ENCODE measurements at regions of chr1 and their contacts with region 1.

Region 1: GRCh38 chr1:20194757-20195461 is 8.6 kb upstream of the PLA2G2C start:
- H3K4me3 Mint-ChIP-seq: no peak overlapping the region
- H3K27ac Mint-ChIP-seq: no peak overlapping the region
- H3K4me1 Mint-ChIP-seq: peaks cover 5% of the 10 kb centered on the region
- H3K27me3 Mint-ChIP-seq: peaks cover 51% of the 10 kb centered on the region

Region 2: DNA sequence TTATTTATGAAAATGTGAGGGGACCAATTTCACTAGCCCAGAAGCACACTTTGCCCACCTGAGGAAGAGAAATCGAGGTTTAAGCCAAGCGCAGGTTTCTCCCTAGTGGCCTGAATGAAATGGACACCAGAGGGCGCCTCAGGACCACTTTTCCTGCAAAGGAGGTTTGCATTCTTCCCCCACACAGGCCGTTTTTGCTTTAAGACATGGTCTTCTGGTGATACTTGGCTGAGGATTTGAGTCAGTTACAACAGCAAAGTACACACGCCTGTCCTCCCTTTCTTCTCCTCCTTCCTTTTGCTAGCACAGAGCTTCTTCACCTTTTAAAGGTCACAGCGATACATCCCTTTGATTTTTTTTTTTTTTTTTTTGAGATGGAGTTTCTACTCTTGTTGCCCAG is 276.9 kb before region 1 on chr1:
- intact Hi-C with region 1: loop called (anchors 1 kb)
- H3K4me3 Mint-ChIP-seq: no peak overlapping the region
- H3K27ac Mint-ChIP-seq: no peak overlapping the region
- H3K4me1 Mint-ChIP-seq: no peaks in the 10 kb centered on the region
- H3K27me3 Mint-ChIP-seq: peaks cover 2% of the 10 kb centered on the region

Region 3: DNA sequence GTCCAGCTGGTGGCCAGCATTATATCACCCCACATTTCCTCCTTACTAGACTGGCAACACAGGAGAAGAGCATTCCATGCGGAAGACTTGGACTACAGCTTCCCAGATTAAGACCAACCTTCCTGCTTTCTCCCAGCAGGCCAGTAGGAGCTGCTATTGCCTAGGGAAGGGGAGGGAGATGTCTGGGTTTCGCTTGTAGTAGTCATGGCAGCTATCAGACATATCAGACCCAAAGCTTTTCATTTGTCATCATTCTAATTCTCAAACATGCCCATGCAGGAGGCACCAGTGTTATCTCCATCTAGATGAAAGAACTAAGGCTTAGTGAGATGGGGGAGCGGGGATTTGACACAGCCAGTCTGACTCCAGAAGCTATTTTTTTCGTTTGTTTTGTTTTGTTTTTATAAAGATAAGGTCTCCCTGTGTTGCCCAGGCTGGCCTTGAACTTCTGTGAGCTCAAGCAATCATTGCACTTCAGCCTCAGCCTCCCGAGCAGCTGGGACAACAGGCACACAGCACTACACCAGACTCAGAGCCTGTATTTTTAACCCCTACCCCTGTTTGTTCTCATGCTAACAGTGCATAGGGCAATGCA is 220.0 kb before region 1 on chr1:
- intact Hi-C with region 1: loop called (anchors 2 kb)
- H3K4me3 Mint-ChIP-seq: no peak overlapping the region
- H3K27ac Mint-ChIP-seq: no peak overlapping the region
- H3K4me1 Mint-ChIP-seq: no peaks in the 10 kb centered on the region
- H3K27me3 Mint-ChIP-seq: peaks cover 53% of the 10 kb centered on the region

Region 4: GRCh38 chr1:20100632-20101355 is 94.1 kb before region 1 on chr1:
- intact Hi-C with region 1: loop called (anchors 2 kb)
- H3K4me3 Mint-ChIP-seq: no peak overlapping the region
- H3K27ac Mint-ChIP-seq: no peak overlapping the region
- H3K4me1 Mint-ChIP-seq: peaks cover 16% of the 10 kb centered on the region
- H3K27me3 Mint-ChIP-seq: peaks cover 58% of the 10 kb centered on the region

Region 5: DNA sequence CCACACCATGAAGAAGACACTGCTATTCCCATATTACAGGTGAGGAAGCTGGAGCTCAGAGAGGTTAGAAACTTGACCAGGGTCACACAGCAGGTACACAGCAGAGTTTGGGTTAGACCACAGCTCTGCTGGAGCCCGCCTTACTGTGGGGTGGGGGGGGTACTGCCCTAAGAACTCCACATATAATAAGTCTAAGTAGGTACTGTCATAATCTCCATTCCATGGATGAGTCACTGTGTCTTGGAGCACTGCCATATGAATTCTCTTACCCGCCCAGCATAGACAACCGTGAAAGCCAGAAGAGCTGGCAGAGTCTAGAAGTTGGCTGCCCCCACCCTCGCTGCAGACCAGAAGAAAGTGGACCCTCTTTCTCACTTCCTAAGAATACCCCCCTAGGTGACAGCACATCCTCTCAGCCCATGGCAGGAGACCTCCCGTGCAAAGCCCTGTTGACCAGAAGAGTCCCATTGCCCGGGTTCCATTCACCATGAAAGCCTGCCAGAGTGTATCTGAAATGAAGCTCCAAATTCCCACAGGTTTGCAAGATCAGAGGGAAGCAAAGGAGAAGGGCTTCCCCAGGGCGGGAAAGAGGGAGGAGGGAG is 70.4 kb before region 1 on chr1:
- intact Hi-C with region 1: no loop called
- H3K4me3 Mint-ChIP-seq: no peak overlapping the region
- H3K27ac Mint-ChIP-seq: peak overlapping the region; percentile 49
- H3K4me1 Mint-ChIP-seq: peaks cover 51% of the 10 kb centered on the region
- H3K27me3 Mint-ChIP-seq: peaks cover 35% of the 10 kb centered on the region

Measured in dendritic cell treated with granulocyte-macrophage colony-stimulating factor and Interleukin-4, amounts not matched to agents 40 ng/mL and 50 ng/mL, for 4 days (primary cell).